ENCODE measurements at regions of chr3 and their contacts with region 1.

Region 1: DNA sequence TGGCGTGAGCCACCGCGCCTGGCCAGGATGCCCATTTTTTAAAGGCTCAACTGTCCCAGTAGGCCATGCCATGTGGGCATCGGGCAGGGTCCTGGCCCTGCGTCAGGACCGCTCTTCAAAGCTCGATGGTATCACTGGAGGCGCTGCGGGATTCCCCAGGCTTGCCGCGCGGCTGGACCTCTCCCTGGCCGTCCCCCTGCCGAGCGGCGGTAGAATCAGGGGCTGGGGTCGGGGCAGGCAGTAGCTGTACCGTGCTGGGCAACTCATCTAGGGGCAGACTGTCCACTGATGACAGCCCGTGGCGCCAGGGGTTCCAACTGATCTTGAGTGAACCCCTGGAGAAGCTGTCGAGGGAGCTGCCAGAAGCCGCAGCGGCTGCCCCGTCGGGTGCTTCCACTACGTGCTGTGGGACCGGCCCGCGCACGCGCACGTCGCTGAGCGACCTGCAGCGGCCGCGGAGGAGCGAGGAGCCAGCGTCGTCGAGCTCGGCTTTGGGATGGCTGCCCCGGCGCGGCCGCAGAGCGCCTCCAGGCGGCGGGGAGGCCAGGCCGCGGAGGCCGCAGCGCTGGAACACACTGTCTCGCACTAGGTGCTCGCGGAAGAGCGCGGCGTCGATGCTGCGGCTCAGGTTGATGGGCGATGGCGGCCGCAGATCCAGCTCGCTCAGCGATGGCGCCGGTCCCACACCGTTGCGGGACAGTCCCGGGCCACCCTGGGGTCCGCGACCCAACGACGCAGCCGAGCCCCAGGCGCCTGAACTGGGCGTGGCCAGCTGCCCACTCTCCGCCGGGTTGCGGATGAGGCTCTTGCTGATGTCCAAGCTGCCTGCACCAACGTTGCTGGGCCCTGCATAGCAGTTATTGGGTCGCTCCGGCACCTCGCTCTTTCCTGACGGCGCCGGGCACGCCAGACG is 5.8 kb downstream of the PRRT3 start:
- DNase-seq: peak; percentile 80 to 88 (median 84)
- H3K4me3 ChIP-seq: peak overlapping the region in 1 of 2 donors; percentile 45
- H3K4me3 Mint-ChIP-seq: peak overlapping the region; percentile 40 to 83 (median 79)
- H3K27ac ChIP-seq: peak overlapping the region; percentile 70
- H3K27ac Mint-ChIP-seq: peak overlapping the region; percentile 59 to 94 (median 88)
- H3K4me1 ChIP-seq: peaks cover 6% of the 10 kb centered on the region
- H3K4me1 Mint-ChIP-seq: peaks cover 4 to 23% (median 6%) of the 10 kb centered on the region in 4 donors
- H3K27me3 ChIP-seq: no peaks in the 10 kb centered on the region
- H3K27me3 Mint-ChIP-seq: no peaks in the 10 kb centered on the region

Region 2: GRCh38 chr3:9843715-9844438 is 102.5 kb before region 1 on chr3 and contains the start of gene RPUSD3:
- CTCF ChIA-PET with region 1: interaction called, 13 read pairs
- POLR2A ChIA-PET with region 1: interaction called, 7 read pairs
- intact Hi-C with region 1: no loop called
- DNase-seq: peak; percentile 92 to 98 (median 93)
- H3K4me3 ChIP-seq: peak within 1 kb of the TSS; percentile 80 to 92
- H3K4me3 Mint-ChIP-seq: peak within 1 kb of the TSS; percentile 96 to 99 (median 97)
- H3K27ac ChIP-seq: peak within 1 kb of the TSS; percentile 65
- H3K27ac Mint-ChIP-seq: peak within 1 kb of the TSS; percentile 87 to 97 (median 92)
- H3K4me1 ChIP-seq: peaks cover 23% of the 10 kb centered on the region
- H3K4me1 Mint-ChIP-seq: peaks cover 10 to 36% (median 21%) of the 10 kb centered on the region in 4 donors
- H3K27me3 ChIP-seq: no peaks in the 10 kb centered on the region
- H3K27me3 Mint-ChIP-seq: no peaks in the 10 kb centered on the region
- total RNA-seq, gene RPUSD3: 63.3 to 67.6 TPM

Region 3: DNA sequence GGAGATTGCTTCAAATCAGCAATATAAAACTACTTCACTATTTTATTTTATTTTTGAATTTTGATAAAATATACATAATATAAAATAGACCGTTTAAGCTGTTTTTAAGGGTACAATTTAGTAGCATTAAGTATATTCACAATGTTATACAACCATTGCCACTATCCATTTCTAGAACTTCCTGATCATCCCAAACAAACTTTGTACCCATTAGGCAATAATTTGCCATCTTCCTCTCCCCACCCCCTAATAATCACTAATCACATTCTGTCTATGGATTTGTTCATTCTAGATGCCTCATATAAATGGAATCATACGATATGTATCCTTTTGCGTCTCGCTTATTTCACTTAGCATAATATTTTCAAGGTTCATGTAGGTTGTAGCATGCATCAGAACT is 108.7 kb after region 1 on chr3:
- CTCF ChIA-PET with region 1: no interaction called
- POLR2A ChIA-PET with region 1: no interaction called
- intact Hi-C with region 1: no loop called
- DNase-seq: no peak
- H3K4me3 ChIP-seq: no peak overlapping the region
- H3K4me3 Mint-ChIP-seq: no peak overlapping the region
- H3K27ac ChIP-seq: no peak overlapping the region
- H3K27ac Mint-ChIP-seq: no peak overlapping the region
- H3K4me1 ChIP-seq: no peaks in the 10 kb centered on the region
- H3K4me1 Mint-ChIP-seq: no peaks in the 10 kb centered on the region
- H3K27me3 ChIP-seq: no peaks in the 10 kb centered on the region
- H3K27me3 Mint-ChIP-seq: no peaks in the 10 kb centered on the region